ENCODE measurements at regions of chr12 and their contacts with region 1.

Region 1: DNA sequence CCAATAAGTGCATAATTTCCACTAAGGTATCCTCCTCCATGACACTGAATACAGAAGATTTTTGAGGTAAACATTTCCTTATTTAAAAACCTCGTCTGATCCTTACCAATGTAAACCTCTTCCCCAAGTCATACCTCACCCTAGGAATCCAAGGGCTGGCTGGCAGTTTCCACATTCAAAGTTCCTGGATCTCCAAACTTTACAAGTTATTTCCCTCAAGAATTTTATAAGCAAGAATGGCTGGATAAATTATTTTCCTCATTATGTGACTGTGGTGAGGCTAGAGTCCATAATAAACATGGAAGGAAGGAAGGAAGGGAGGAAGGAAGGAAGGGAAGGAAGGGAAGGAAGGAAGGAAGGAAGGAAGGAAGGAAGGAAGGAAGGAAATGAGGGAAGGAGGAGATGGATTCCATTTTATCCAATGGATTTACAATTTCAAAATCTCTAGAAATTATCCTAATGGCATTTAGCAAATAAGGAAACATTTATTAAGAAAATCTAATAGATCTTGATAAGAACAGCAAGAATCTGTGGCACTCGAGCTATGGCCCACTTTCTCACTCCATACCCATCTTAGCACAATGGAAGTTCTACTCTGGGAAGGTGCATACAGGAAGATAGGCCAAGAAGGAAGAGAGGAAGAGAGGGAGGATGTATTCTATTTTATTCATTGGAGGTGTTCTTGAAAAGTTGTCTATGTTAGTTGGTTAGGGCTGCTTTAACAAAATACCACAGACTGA is 477.8 kb upstream of the TMPO start:
- DNase-seq: no peak
- H3K4me3 ChIP-seq: no peak overlapping the region
- CTCF ChIP-seq: no peak

Region 2: DNA sequence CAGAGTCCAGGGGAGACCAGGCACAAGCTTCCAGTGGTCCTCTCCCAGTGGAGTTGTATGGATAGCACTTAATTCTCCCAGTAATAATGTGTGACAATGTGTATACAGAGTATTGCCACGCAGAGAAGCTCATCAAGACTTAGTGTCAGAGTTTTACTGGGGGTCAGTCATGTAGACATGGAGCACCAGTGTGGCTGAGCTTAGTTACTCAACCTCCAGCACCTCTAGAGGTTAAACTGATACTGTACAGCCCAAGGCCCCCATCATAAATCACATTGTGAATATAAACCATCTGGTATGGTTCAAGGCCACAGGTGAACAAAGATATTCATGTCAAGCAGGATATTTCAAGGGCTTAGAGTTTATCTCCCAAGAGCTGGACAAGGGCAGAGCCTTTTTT is 99.7 kb after region 1 on chr12:
- in situ Hi-C with region 1: loop called (anchors 5 kb)
- DNase-seq: no peak
- H3K4me3 ChIP-seq: no peak overlapping the region
- CTCF ChIP-seq: no peak

Measured in astrocyte of the cerebellum (primary cell).